ENCODE measurements at regions of chr21 and their contacts with region 1.

Region 1: GRCh38 chr21:30541764-30542163 is at the start of gene KRTAP19-6:
- DNase-seq: no peak
- CTCF ChIP-seq: no peak

Region 2: DNA sequence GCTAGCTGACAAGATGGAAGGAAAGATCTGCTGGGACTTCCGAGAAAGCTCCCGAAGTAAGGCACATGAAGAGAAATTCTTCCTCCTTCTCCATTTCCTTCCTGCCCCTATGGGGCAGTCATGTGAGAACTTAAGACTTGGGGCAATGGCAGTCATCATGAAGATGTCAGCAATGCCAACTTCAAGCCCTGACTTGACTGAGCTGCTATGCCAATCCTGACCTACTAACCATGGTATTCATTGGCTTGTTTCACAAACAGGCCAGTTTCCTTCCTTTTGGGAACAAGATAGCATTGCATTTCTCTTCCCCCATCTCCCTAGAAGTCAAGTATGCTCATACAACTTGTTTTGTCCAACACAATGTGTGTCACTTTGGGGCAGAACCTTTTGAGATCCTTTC is 627.4 kb before region 1 on chr21:
- in situ Hi-C with region 1: no loop called
- DNase-seq: no peak
- CTCF ChIP-seq: no peak

Region 3: GRCh38 chr21:30434033-30434631 is 107.6 kb before region 1 on chr21:
- in situ Hi-C with region 1: loop called (anchors 25 kb)
- DNase-seq: no peak
- CTCF ChIP-seq: no peak

Measured in GM13976 (cell line).